AG04450 (cell line): ENCODE measurements at regions of chr2 and their contacts with region 1.

Region 1: GRCh38 chr2:177332041-177332991 is 60.3 kb upstream of the AGPS start:
- DNase-seq: peak; percentile 62
- H3K4me3 ChIP-seq: no peak overlapping the region
- H3K27ac ChIP-seq: no peak overlapping the region
- H3K27me3 ChIP-seq: no peaks in the 10 kb centered on the region
- CTCF ChIP-seq: peak; percentile 72

Region 2: GRCh38 chr2:177229448-177230242 is 102.7 kb before region 1 on chr2:
- CTCF ChIA-PET with region 1: interaction called, 10 read pairs
- POLR2A ChIA-PET with region 1: interaction called, 4 read pairs
- DNase-seq: no peak
- H3K4me3 ChIP-seq: no peak overlapping the region
- H3K27ac ChIP-seq: no peak overlapping the region
- H3K27me3 ChIP-seq: no peaks in the 10 kb centered on the region
- CTCF ChIP-seq: no peak

Region 3: DNA sequence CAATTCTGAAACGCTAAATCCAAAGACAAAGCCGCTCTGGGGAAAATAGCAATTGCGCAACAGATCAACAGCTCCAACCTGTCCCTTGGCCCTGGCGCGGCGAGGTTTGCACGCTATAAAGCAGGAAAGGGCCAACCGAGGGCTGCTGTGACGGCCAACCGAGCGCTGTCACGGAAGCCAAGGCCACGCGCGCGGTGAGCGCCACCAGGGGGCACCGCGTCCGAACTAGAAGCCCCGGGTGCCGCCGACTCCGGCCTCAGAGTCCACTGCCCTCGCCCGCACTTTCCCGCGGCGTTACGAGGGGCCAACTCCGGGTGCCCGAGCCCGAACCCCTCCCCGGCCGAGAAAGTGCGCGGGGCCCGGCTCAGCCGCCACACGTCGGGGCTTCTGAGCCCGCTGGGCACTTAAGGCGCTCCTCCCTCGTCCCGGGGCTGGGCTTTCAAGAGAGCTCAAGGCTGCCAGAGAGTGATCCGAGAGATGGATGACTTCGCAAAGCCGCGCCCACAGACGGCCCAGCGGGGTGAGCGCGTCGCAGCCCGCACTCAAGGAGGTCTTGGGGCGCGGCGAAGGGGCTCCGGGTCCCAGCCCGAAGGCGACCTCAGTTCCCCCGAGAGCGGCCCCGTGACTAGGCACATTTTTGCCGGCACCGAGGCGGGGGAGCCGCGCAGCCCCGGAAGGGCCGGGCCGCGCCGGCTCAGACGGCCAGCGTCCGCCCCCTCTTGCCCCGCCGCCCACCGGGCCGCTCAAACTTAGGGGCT is 68.7 kb before region 1 on chr2:
- CTCF ChIA-PET with region 1: interaction called, 61 read pairs
- POLR2A ChIA-PET with region 1: interaction called, 5 read pairs
- DNase-seq: peak; percentile 92
- H3K4me3 ChIP-seq: peak overlapping the region; percentile 80
- H3K27ac ChIP-seq: peak overlapping the region; percentile 99
- H3K27me3 ChIP-seq: no peaks in the 10 kb centered on the region
- CTCF ChIP-seq: peak; percentile 85

Region 4: GRCh38 chr2:177359836-177360595 is 27.7 kb after region 1 on chr2:
- CTCF ChIA-PET with region 1: interaction called, 14 read pairs
- POLR2A ChIA-PET with region 1: no interaction called
- DNase-seq: no peak
- H3K4me3 ChIP-seq: no peak overlapping the region
- H3K27ac ChIP-seq: no peak overlapping the region
- H3K27me3 ChIP-seq: no peaks in the 10 kb centered on the region
- CTCF ChIP-seq: no peak

Region 5: GRCh38 chr2:177604271-177605065 is 272.2 kb after region 1 on chr2:
- CTCF ChIA-PET with region 1: interaction called, 47 read pairs
- POLR2A ChIA-PET with region 1: no interaction called
- DNase-seq: peak; percentile 23
- H3K4me3 ChIP-seq: peak overlapping the region; percentile 8; the same call in 1 of the 2 replicates
- H3K27ac ChIP-seq: no peak overlapping the region
- H3K27me3 ChIP-seq: no peaks in the 10 kb centered on the region
- CTCF ChIP-seq: peak; percentile 85

Region 6: DNA sequence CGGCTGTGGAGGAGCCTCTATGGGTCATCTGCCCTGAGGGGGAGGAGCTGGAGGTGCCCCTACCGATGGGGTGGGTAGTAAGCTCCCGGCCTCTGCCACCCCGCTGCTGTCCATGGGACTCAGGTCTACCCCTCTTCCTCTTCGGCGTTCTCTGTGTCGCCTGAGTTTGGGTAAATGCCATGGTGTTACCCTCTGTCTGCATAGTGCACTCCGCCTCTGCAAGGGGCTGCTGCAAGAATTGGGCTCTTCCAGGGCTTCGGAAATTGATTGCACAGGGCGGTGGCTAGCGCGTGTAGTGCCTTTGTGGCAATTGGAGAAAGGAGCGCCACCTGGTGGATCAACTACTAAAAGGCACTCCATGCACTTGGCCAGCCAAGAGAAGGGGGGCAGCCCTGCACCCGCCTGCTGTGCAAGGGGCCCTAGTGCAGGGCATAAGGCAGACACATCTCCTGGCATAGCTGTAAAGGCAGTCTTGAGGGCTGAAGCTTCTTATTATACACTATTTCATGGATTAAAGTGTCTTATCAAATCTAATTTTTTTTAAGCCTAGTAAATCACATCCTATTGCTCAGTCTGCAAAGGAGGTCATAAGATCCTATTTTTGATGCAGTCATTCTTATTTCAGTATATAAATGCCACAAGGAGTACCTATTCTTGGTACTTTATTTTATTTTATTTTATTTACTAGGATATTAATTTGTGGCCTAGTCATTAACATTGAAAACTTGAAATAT is 431.4 kb after region 1 on chr2:
- CTCF ChIA-PET with region 1: interaction called, 15 read pairs
- POLR2A ChIA-PET with region 1: no interaction called
- DNase-seq: peak; percentile 29
- H3K4me3 ChIP-seq: peak overlapping the region; percentile 21; the same call in 1 of the 2 replicates
- H3K27ac ChIP-seq: no peak overlapping the region
- H3K27me3 ChIP-seq: no peaks in the 10 kb centered on the region
- CTCF ChIP-seq: peak; percentile 80

Region 7: GRCh38 chr2:177900082-177900481 is 567.8 kb after region 1 on chr2:
- CTCF ChIA-PET with region 1: no interaction called
- POLR2A ChIA-PET with region 1: no interaction called
- DNase-seq: no peak
- H3K4me3 ChIP-seq: no peak overlapping the region
- H3K27ac ChIP-seq: no peak overlapping the region
- H3K27me3 ChIP-seq: no peaks in the 10 kb centered on the region
- CTCF ChIP-seq: no peak